H1 (cell line): ENCODE measurements at regions of chr14 and their contacts with region 1.

Region 1: DNA sequence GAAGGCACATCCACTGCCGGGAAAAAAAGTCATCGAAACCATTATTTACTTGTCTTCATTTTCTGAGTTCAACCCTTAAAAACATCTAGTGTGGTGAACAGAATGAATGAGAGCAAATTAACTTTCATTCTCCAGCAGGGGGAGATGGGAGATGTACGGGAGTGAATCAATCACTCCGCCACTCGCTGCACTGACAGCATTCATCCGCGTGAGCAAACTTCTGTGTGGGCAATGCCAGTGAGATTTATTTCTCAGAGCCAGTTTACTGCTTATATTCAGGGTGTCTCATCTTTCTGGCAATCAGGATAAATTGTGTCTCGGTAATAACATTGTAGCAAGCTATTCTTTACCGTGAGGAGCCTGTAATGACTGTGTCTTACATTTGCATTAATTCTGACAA is 463.6 kb upstream of the MIS18BP1 start:
- DNase-seq: no peak
- H3K4me3 ChIP-seq: no peak overlapping the region
- H3K27ac ChIP-seq: no peak overlapping the region
- H3K4me1 ChIP-seq: no peaks in the 10 kb centered on the region
- H3K27me3 ChIP-seq: no peaks in the 10 kb centered on the region
- CTCF ChIP-seq: peak; percentile 46 to 62 (median 50)
- EP300 ChIP-seq: no peak
- POLR2A ChIP-seq: no peak
- RAD21 ChIP-seq: peak; percentile 50 to 51

Region 2: GRCh38 chr14:45728434-45729225 is 12.1 kb after region 1 on chr14:
- CTCF ChIA-PET with region 1: interaction called, 17 read pairs
- POLR2A ChIA-PET with region 1: no interaction called
- DNase-seq: no peak
- H3K4me3 ChIP-seq: no peak overlapping the region
- H3K27ac ChIP-seq: no peak overlapping the region
- H3K4me1 ChIP-seq: no peaks in the 10 kb centered on the region
- H3K27me3 ChIP-seq: no peaks in the 10 kb centered on the region
- CTCF ChIP-seq: no peak
- EP300 ChIP-seq: no peak
- POLR2A ChIP-seq: no peak
- RAD21 ChIP-seq: no peak

Region 3: DNA sequence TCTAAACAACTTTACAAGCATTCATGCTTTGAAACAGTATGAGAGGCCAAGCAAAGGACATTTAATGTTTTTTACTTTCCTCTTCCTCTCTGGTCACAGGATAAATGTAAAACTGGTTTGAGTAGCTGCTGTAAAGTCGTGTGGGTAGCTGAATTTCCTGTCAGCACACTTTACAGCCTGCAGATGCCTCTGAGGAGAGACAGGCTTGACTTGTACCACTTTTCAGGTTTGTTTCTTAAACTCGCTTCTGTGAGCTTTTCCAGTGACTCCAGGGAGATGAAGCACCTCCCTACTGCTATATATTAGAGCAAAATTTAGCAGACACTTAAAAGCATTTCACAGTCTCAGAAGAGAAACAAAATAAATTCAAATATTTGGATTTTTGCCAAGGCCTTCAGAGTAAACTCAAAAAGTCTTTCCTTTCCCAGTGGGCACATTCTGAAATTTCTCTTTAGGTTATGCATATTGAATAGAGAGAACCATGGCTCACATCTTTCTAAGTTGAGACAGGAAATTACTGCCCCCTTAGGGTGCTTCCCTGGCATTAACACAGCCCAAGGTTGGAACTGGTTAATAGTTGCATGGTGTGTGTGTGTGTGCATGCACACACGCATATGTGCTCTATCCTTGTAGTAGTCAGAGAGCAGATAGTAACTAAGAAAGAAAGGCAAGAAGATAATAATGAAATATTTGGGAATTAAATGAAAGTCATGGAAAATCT is 93.7 kb after region 1 on chr14:
- CTCF ChIA-PET with region 1: interaction called, 10 read pairs
- POLR2A ChIA-PET with region 1: no interaction called
- DNase-seq: no peak
- H3K4me3 ChIP-seq: no peak overlapping the region
- H3K27ac ChIP-seq: no peak overlapping the region
- H3K4me1 ChIP-seq: no peaks in the 10 kb centered on the region
- H3K27me3 ChIP-seq: no peaks in the 10 kb centered on the region
- CTCF ChIP-seq: peak in 2 of 3 experiments; percentile 39 to 59; a peak in 2 of 4 replicates
- EP300 ChIP-seq: no peak
- POLR2A ChIP-seq: no peak
- RAD21 ChIP-seq: peak; percentile 59 to 69